Heart left ventricle (tissue), 16 donors: ENCODE measurements at regions of chr6 and their contacts with region 1.

Region 1: GRCh38 chr6:36979347-36979742 is 6.7 kb downstream of the MTCH1 start:
- DNase-seq: peak in 4 of 5 donors; percentile 64 to 78 (median 66)
- ATAC-seq: peak; percentile 54 to 72 (median 60)
- H3K4me3 ChIP-seq: no peak overlapping the region
- H3K27ac ChIP-seq: peak overlapping the region in 11 of 12 donors; percentile 22 to 77 (median 51)
- H3K4me1 ChIP-seq: peaks cover 12 to 96% (median 77%) of the 10 kb centered on the region in 12 donors
- H3K27me3 ChIP-seq: no peaks in the 10 kb centered on the region
- CTCF ChIP-seq: peak; percentile 19 to 74 (median 58)
- POLR2A ChIP-seq: no peak

Region 2: DNA sequence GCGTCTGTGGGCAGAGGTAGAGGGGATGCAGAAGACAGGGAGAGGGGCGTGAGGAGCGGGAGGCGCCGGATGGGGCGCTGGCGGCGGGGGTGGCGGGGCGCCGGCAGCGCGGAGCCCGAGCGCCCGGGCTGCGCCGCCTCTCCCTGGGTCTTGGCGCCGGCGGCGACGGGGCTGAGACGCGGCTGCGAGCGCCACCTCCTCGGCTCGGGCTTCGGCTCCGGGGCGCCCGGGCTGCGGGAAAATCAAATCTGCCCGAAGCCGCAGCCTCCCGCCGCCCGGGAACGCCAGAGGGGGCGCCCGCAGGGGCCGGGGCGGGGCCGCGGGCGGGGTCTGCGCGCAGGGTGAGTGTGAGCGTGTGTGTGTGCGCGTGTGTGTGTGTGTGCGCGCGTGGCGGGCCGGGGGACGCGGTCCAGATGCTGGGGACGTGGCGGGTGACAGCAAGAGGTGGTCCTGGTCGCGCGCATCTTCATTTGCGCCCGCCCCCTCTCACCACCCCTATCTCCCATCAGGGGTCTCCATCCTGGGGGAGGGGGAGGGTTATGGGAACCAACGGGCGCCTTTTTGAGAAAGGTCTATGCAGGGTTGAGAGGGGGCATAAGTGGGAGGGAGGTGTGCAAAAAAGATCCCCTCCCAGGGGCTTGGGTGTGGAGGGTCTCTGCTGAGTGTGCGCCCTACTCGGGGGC is 139.5 kb before region 1 on chr6:
- intact Hi-C with region 1: loop called in 1 of 10 experiments (anchors 5 kb)
- DNase-seq: peak; percentile 59 to 80 (median 75)
- ATAC-seq: peak in 3 of 4 donors; percentile 6 to 43 (median 24)
- H3K4me3 ChIP-seq: peak overlapping the region; percentile 33 to 76 (median 60)
- H3K27ac ChIP-seq: peak overlapping the region; percentile 65 to 91 (median 75)
- H3K4me1 ChIP-seq: peaks cover 4 to 61% (median 17%) of the 10 kb centered on the region in 12 donors
- H3K27me3 ChIP-seq: peaks cover 0 to 24% (median 0%) of the 10 kb centered on the region in 9 donors
- CTCF ChIP-seq: peak in 10 of 12 donors; percentile 9 to 56 (median 42)
- POLR2A ChIP-seq: no peak

Region 3: DNA sequence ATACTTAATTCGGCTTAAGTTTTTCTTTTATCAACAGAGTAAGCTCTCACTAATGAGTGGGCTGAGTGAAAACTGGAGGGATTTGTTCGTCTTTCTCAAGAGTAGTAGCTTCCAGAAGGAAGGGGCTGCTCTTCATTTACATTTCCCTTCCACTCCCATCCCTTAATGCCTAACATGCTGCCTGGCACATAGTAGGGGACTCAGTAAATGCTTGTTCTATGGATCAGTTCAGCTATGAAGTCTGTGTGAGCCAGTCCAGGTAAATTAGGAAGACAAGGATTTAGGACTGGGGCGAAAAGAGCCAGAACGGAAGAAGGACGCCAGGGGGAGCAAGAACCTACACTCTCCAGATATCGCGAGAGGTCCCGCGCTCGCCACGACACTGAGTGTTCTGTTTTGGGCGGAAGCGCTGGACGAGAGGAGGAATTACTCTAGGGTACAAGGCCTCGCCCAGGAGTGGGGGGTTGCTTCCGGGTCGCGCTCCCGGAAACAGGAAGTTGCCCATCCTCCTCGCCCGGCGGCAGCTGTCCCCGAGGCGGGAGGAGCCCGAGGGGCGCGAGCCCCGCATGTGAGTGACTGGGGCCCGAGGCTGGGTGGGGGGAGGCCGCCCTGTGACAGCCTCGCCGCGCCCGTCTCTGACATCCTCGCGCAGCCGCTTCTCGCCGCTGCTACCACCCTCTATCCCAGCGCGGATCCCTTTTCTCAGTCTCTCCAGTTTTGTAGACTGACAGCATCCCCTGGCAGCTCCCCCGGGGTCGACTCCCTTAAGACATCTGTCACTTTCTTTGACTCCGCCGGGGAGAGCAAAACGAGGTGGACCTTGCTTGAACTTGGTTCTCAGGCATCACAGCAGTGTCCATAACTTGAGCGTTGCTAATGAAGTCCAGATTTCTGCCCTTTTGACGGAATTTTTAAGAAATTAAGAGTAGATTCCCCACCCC is 93.6 kb before region 1 on chr6 and contains the start of gene C6orf89:
- intact Hi-C with region 1: loop called in 8 of 10 experiments (anchors 2 to 10 kb)
- DNase-seq: peak; percentile 97 to 99 (median 98)
- ATAC-seq: peak; percentile 99 to 100 (median 100)
- H3K4me3 ChIP-seq: peak within 1 kb of the TSS; percentile 52 to 93 (median 83)
- H3K27ac ChIP-seq: peak within 1 kb of the TSS; percentile 77 to 95 (median 88)
- H3K4me1 ChIP-seq: peaks cover 0 to 42% (median 26%) of the 10 kb centered on the region in 12 donors
- H3K27me3 ChIP-seq: no peaks in the 10 kb centered on the region
- CTCF ChIP-seq: peak; percentile 73 to 94 (median 87)
- POLR2A ChIP-seq: peak in 1 of 2 donors; percentile 75
- total RNA-seq, gene C6orf89: 54.2 to 86.2 (median 75.5) TPM

Region 4: GRCh38 chr6:36912586-36912985 is 66.8 kb before region 1 on chr6:
- intact Hi-C with region 1: loop called in 5 of 10 experiments (anchors 5 to 10 kb)
- DNase-seq: no peak
- ATAC-seq: no peak
- H3K4me3 ChIP-seq: no peak overlapping the region
- H3K27ac ChIP-seq: peak overlapping the region in 2 of 12 donors; percentile 27 to 46
- H3K4me1 ChIP-seq: peaks cover under 1 to 43% (median 16%) of the 10 kb centered on the region in 12 donors
- H3K27me3 ChIP-seq: no peaks in the 10 kb centered on the region
- CTCF ChIP-seq: no peak
- POLR2A ChIP-seq: no peak